Ascending aorta (tissue), 2 donors: ENCODE measurements at regions of chr3 and their contacts with region 1.

Region 1: GRCh38 chr3:129627429-129628168 is 21.1 kb upstream of the PLXND1 start:
- DNase-seq: peak in 1 of 2 donors; percentile 89
- H3K4me3 ChIP-seq: peak overlapping the region; percentile 71 to 75
- H3K27ac ChIP-seq: peak overlapping the region; percentile 99 to 100
- H3K4me1 ChIP-seq: peaks cover 3 to 42% of the 10 kb centered on the region in 2 donors
- H3K27me3 ChIP-seq: no peaks in the 10 kb centered on the region
- CTCF ChIP-seq: peak; percentile 59 to 83 (median 78)

Region 2: GRCh38 chr3:129316131-129317013 is 311.2 kb before region 1 on chr3:
- intact Hi-C with region 1: loop called (anchors 5 kb)
- DNase-seq: peak in 1 of 2 donors; percentile 91
- H3K4me3 ChIP-seq: peak overlapping the region; percentile 82 to 87
- H3K27ac ChIP-seq: peak overlapping the region; percentile 89 to 90
- H3K4me1 ChIP-seq: peaks cover 5 to 18% of the 10 kb centered on the region in 2 donors
- H3K27me3 ChIP-seq: no peaks in the 10 kb centered on the region
- CTCF ChIP-seq: peak in 2 of 3 experiments; percentile 57 to 68

Region 3: DNA sequence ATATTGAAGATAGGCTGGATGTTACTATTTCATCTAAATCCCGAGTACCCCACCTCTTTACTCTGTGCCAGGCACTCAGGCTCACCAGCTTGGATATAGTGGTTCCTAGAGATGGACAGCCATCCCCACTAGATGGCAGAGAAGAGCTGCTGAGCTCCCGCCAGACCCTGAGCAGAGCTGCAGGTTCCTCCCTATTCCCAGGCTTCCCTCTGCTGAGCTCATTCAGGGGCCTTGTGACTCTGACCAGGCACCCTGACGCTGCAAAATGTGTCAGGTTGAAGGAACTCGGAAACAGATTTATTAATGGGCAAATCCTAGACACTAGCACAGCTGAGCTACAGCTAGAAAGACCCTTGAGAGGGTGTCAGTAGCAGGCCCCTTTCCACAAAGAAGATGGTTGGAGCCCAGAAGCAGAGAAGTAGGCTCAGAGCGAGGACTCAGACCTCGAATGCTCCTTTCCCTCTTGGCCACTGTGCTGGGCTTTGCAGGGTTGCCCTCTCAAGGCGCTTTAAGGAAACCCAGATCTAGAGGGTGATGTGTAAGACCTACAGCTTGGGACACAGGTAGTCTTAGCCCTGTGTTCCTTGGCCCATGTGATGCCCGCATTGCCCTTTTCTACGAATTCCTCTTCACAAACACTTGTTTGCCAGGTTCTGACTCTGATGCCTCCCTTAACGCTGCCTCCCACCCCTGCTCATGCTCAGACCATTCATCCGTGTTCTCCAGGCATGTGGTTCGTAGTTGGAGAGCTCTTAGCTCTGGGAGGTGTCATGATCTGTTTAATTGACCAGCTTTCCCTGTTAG is 137.2 kb before region 1 on chr3:
- intact Hi-C with region 1: loop called (anchors 2 kb)
- DNase-seq: peak; percentile 83 to 93
- H3K4me3 ChIP-seq: no peak overlapping the region
- H3K27ac ChIP-seq: peak overlapping the region; percentile 86 to 90
- H3K4me1 ChIP-seq: peaks cover 15 to 34% of the 10 kb centered on the region in 2 donors
- H3K27me3 ChIP-seq: no peaks in the 10 kb centered on the region
- CTCF ChIP-seq: peak; percentile 83 to 87 (median 87)

Region 4: DNA sequence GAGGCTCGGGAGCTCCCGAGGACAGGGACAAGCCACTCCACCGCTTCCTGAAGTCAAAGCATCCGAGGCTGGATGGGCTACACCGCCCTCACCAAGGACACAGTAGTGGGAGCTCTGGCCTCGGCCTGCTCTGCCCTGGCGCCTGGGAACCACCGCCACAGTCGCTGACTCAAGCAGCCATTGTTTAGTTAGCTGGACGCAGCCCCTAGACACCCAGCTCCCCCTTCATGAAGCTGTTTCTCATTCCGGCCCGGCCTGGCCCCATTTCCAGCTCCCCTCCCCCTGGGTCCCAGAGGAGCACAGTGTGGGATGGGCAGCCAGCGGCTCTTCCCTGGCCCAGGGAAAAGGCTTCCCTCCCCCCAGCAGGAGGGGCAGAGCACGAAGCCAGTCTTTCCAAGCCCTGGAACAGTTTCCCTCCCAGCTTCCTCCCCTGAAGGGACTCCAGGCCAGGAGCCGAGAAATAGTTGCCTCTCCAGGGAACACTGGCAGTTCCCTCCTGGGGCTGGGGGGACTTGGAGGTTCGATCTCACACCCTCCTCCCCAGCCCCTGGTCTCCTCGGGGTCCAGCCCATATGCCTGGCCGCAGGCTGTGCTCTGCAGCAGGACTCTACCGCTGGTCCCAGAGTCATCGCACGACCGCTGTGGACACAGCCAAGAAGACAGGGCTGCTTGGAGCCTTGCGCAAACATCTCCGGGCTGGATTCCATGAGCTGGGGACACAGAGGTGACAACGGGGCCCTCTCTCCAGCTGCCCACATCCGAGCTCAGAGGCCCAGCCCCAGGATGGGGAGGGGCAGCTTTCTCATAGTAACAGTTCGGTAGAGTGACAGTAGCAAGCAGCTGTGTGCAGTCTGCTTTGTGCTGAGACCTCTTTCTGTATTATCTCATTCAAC is 31.2 kb before region 1 on chr3:
- intact Hi-C with region 1: loop called (anchors 1 kb)
- DNase-seq: peak; percentile 79 to 95
- H3K4me3 ChIP-seq: peak overlapping the region; percentile 37 to 45
- H3K27ac ChIP-seq: peak overlapping the region; percentile 89 to 92
- H3K4me1 ChIP-seq: peaks cover 46 to 84% of the 10 kb centered on the region in 2 donors
- H3K27me3 ChIP-seq: no peaks in the 10 kb centered on the region
- CTCF ChIP-seq: no peak

Region 5: GRCh38 chr3:129824926-129825541 is 197.4 kb after region 1 on chr3:
- intact Hi-C with region 1: loop called (anchors 2 kb)
- DNase-seq: no peak
- H3K4me3 ChIP-seq: no peak overlapping the region
- H3K27ac ChIP-seq: no peak overlapping the region
- H3K4me1 ChIP-seq: no peaks in the 10 kb centered on the region
- H3K27me3 ChIP-seq: no peaks in the 10 kb centered on the region
- CTCF ChIP-seq: peak; percentile 41 to 63 (median 63)

Region 6: DNA sequence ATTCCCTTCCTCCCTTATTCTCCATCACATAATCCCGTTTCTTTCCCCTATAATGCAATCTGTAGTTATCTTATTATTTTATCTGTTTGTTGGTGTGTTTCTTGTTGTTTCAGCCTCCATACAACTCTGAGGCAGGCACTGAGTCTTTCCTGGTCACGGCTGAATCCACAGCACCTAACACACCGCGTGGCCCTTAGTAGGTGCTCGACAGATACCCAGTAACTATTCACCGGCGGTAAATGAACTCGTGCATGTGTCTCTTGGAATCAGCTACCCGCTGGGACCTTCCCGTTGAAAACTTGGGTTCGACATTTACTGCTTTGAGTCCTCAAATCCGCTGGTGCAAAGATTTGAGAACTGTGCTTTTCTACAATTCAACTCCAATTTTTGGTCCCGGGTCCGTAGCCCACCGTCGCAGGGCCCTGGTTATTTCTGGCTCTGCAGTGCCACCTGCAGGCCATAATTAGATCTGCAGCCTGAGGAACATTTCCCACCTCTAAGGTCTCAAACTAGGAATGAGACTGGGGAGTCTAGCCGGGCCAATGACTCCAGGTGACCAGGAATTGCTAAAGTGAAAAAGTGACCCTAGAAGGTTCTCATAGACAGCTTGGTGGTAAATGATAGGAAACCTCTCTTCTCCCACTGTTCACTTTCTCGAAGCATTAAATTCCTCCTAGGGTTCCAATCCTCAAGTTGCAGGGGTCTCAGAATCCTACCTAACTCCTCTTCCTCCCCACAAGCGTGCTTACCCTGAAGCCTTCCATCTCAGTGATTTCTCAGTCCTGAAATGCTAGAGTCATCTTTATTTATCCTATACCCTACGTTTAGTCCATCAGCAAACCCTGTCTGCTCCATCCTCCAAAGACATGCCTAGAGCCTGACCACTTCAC is 306.9 kb after region 1 on chr3:
- intact Hi-C with region 1: loop called (anchors 1 kb)
- DNase-seq: no peak
- H3K4me3 ChIP-seq: peak overlapping the region in 1 of 2 donors; percentile 43
- H3K27ac ChIP-seq: no peak overlapping the region
- H3K4me1 ChIP-seq: no peaks in the 10 kb centered on the region
- H3K27me3 ChIP-seq: no peaks in the 10 kb centered on the region
- CTCF ChIP-seq: peak; percentile 81 to 91 (median 89)